Activated T-helper 2 cell treated with anti-CD3 and anti-CD28 coated beads, Interferon-gamma antibody, Interleukin-2, Interleukin-4, amounts not matched to agents 10 μg/mL and 5 μg/mL and 100 μg/mL, durations not matched to agents 14 hours and 24 hours and 36 hours (primary cell): ENCODE measurements at regions of chr1 and their contacts with region 1.

Region 1: GRCh38 chr1:113389953-113390834 is at the start of gene MAGI3:
- DNase-seq: peak; percentile 94
- H3K4me3 Mint-ChIP-seq: peak within 1 kb of the TSS; percentile 88
- H3K27ac Mint-ChIP-seq: peak within 1 kb of the TSS; percentile 80
- H3K4me1 Mint-ChIP-seq: peaks cover 26% of the 10 kb centered on the region
- H3K27me3 Mint-ChIP-seq: peaks cover 43% of the 10 kb centered on the region
- total RNA-seq, gene MAGI3: 4.1 and 4.4 TPM in 2 replicates

Region 2: GRCh38 chr1:112390775-112391602 is 999.2 kb before region 1 on chr1:
- intact Hi-C with region 1: loop called (anchors 10 kb)
- DNase-seq: peak; percentile 73
- H3K4me3 Mint-ChIP-seq: peak overlapping the region; percentile 75
- H3K27ac Mint-ChIP-seq: no peak overlapping the region
- H3K4me1 Mint-ChIP-seq: peaks cover 39% of the 10 kb centered on the region
- H3K27me3 Mint-ChIP-seq: peaks cover 5% of the 10 kb centered on the region

Region 3: DNA sequence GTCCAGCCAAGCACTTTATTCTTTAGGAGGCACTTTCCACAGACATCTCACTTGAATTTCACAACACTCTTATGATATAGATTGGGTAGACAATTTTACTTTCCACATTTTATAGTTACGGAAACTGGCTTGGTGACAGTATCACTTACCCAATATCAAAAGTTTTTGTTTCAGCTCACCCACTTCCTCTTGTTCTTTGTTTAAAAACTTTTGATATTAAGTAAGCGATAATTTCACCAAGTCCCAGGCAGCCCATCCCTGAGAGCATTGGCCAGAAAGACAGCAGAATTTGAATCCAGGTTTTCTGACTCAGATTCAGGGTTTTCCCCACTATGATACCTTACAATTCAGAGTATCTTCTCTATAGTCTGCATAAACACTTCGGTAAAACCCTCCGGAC is 257.2 kb before region 1 on chr1:
- intact Hi-C with region 1: loop called (anchors 5 kb)
- DNase-seq: no peak
- H3K4me3 Mint-ChIP-seq: no peak overlapping the region
- H3K27ac Mint-ChIP-seq: no peak overlapping the region
- H3K4me1 Mint-ChIP-seq: peaks cover 45% of the 10 kb centered on the region
- H3K27me3 Mint-ChIP-seq: no peaks in the 10 kb centered on the region

Region 4: DNA sequence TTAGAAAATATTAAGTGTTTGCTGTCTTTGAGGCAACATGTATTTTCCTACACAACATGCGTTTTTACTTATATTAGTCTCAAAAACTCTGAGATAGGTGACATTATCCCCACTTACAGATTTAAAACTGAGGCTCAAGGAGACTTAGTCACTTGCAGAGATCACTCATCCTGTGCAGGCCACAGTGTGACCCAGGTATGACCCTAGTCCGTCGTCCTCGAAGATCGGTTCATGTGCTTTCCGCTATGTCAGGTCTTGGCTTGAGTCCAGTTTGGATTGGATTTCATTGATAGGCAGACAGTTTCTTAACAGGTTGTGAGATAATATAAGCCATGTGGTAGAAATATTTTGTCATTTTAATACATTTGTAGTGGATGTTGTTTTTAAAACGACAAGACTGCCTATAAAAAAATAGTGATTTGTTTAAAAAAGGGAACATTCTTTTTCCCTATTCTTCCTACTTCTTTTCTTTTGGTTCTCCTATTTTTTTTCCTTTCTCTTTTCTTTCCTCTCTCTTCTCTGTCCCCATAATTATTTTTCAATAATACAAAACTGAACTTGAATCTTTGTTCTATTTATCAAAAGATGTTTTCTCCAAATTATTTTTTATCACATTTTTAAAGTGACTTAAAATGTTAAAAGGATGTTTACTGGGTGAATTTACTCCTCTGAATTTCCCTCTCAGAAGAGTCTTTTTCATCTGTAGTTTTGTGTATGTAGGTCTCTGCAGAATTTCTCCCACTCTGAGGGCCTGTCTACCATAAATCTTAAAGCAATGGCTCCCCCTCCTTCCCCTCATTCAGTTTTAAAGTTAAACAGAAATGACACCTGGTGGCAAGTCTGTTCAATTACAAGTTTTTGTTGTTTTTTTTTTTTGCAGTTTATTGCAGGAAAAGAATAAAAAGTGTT is 287.3 kb after region 1 on chr1:
- intact Hi-C with region 1: loop called (anchors 10 kb)
- DNase-seq: no peak
- H3K4me3 Mint-ChIP-seq: no peak overlapping the region
- H3K27ac Mint-ChIP-seq: no peak overlapping the region
- H3K4me1 Mint-ChIP-seq: peaks cover 15% of the 10 kb centered on the region
- H3K27me3 Mint-ChIP-seq: peaks cover 2% of the 10 kb centered on the region

Region 5: DNA sequence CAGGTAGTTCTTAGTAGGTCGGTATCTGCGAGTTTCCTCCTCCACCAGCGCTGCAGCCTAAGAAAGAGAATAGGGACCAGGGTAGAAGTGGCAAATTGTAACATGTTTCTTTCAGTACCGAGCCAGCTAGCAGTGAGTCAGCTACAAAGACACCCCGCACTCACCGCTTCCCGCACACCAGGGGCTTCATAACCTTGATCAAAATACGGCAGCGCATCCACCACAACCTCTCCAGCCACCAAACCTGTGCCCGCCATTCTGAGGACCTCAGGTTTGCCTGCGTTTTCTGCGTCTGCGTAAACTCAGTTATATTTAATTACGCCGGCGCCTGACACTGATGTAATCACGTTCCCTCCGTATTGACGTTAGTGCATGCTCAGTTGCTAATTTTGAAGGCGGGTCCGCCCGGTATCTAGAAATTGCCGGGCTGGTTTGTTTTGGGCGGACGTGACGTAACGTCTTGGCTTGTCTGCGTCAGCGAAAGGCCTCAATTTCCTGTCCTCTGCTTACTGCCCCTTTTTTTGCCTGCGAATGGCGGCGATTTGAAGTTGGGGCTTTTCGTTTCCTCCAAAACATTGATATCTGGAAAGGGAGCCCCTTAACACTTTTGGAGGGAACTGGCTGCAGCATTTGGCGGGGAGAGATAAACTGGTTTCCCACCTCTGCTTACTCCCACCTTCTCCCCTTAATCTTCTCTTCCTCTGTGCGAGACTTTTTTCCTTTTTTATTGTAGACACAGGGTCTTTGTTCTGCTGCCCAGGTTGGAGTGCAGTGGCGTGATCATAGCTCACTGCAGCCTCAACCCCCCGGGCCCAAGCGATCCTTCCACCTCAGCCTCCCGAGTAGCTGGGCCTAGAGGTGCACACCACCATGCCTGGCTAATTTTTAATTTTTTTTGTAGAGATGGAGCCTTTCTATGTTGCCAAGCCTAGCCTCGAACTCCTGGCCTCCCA is 1191.4 kb after region 1 on chr1 and contains the start of gene BCAS2:
- intact Hi-C with region 1: loop called (anchors 10 kb)
- DNase-seq: peak; percentile 95
- H3K4me3 Mint-ChIP-seq: peak within 1 kb of the TSS; percentile 95
- H3K27ac Mint-ChIP-seq: peak within 1 kb of the TSS; percentile 97
- H3K4me1 Mint-ChIP-seq: peaks cover 17% of the 10 kb centered on the region
- H3K27me3 Mint-ChIP-seq: peaks cover 2% of the 10 kb centered on the region
- total RNA-seq, gene BCAS2: 52.1 and 54.1 TPM in 2 replicates